Endothelial cell of umbilical vein (primary cell): ENCODE measurements at regions of chr4 and their contacts with region 1.

Region 1: GRCh38 chr4:18138076-18138665 is 116.6 kb upstream of the LCORL start:
- DNase-seq: no peak
- H3K4me3 ChIP-seq: no peak overlapping the region
- H3K27ac ChIP-seq: no peak overlapping the region
- H3K4me1 ChIP-seq: no peaks in the 10 kb centered on the region
- H3K27me3 ChIP-seq: no peaks in the 10 kb centered on the region
- CTCF ChIP-seq: no peak
- POLR2A ChIP-seq: no peak

Region 2: GRCh38 chr4:17817020-17817419 is 321.2 kb before region 1 on chr4:
- CTCF ChIA-PET with region 1: interaction called, 10 read pairs
- POLR2A ChIA-PET with region 1: no interaction called
- dilution Hi-C with region 1: no loop called
- intact Hi-C with region 1: no loop called
- DNase-seq: peak; percentile 75
- H3K4me3 ChIP-seq: no peak overlapping the region
- H3K27ac ChIP-seq: no peak overlapping the region
- H3K4me1 ChIP-seq: peaks cover 23% of the 10 kb centered on the region
- H3K27me3 ChIP-seq: no peaks in the 10 kb centered on the region
- CTCF ChIP-seq: peak; percentile 28 to 33
- POLR2A ChIP-seq: no peak